Body of pancreas (tissue), 4 donors: ENCODE measurements at regions of chr1 and their contacts with region 1.

Region 1: GRCh38 chr1:39609618-39610331 is 29.7 kb downstream of the HEYL start:
- DNase-seq: peak in 3 of 4 donors; percentile 53 to 68 (median 60)
- ATAC-seq: no peak
- H3K4me3 ChIP-seq: no peak overlapping the region
- H3K27ac ChIP-seq: no peak overlapping the region
- H3K4me1 ChIP-seq: peaks cover 4% of the 10 kb centered on the region
- H3K27me3 ChIP-seq: no peaks in the 10 kb centered on the region
- CTCF ChIP-seq: peak in 5 of 7 experiments; percentile 18 to 61 (median 47)
- POLR2A ChIP-seq: no peak

Region 2: DNA sequence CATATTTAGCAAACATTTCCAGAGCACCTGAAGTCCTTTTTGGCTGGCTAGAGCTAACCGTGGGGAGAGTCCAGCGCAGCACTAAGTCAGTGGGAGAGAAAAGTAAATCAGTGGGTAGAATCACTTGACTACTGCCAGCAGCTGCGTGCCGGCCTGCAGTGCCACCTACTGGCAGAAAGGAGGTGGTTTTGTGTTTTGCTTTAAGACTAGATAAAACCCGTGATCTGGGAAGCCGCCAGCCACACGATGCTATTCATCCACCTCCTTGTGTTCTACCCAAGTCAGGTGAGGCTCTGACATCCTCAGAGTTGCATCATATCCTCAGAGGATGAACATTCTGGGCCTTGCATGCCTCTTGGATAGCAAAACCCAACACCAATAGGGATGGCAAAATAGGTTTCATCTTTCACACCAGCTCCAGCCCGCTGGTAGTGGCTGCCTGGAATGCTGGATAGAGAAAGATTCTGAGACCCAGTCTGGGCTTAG is 43.8 kb after region 1 on chr1:
- intact Hi-C with region 1: loop called (anchors 5 kb)
- DNase-seq: peak; percentile 83 to 88 (median 83)
- ATAC-seq: peak; percentile 81
- H3K4me3 ChIP-seq: no peak overlapping the region
- H3K27ac ChIP-seq: peak overlapping the region in 2 of 4 donors; percentile 1 to 40
- H3K4me1 ChIP-seq: peaks cover 30% of the 10 kb centered on the region
- H3K27me3 ChIP-seq: no peaks in the 10 kb centered on the region
- CTCF ChIP-seq: peak; percentile 85 to 95 (median 91)
- POLR2A ChIP-seq: no peak

Region 3: DNA sequence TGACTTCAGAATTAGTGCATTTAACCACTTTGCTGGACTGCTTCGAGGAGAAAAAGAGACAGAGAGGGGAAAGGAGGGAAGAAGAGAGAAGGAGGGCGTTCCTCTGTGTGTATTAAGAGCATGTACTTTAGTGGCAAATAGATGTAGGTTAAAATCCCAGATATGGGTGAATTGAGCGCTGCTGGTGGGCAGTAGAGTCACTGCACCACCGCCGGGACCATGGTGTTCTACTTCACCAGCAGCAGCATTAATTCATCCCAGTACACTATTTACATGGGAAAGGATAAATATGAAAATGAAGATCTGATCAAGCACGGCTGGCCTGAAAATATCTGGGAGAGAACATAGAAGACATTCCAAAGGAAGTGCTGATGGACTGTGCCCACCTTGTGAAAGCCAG is 108.0 kb after region 1 on chr1:
- intact Hi-C with region 1: loop called (anchors 5 kb)
- DNase-seq: no peak
- ATAC-seq: no peak
- H3K4me3 ChIP-seq: no peak overlapping the region
- H3K27ac ChIP-seq: no peak overlapping the region
- H3K4me1 ChIP-seq: no peaks in the 10 kb centered on the region
- H3K27me3 ChIP-seq: no peaks in the 10 kb centered on the region
- CTCF ChIP-seq: no peak
- POLR2A ChIP-seq: no peak

Region 4: DNA sequence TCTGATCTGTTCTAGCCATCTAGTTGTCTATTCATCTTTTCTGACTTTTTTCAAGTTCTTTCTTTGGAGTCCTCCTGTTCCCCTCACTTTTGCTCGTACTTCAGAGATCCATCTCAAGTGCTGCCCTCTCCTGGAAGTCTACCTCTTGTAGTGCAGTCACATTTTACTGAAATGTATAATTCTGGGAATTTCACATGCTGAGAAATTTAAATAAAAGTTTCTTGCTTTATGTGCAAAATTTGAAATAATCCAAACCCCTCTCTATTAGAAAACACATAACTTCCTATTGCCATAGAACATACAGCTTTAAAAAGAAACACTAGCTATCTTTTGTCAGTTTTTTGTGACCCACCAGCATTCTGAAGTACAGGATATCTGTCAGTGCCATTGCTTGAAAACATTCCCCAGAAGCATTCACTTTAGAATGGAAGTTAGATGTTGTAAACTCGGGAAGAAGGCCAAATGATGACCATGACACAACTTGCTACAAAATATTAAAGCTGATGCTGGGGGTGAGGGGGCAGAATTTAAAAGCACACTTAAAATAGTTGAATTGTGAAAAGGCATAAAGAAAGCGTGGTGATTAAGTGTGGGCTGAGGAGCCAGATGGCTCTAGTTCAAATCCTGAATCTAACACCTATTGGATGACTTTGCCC is 573.4 kb after region 1 on chr1:
- intact Hi-C with region 1: no loop called
- DNase-seq: no peak
- ATAC-seq: no peak
- H3K4me3 ChIP-seq: no peak overlapping the region
- H3K27ac ChIP-seq: no peak overlapping the region
- H3K4me1 ChIP-seq: no peaks in the 10 kb centered on the region
- H3K27me3 ChIP-seq: no peaks in the 10 kb centered on the region
- CTCF ChIP-seq: peak in 2 of 7 experiments; percentile 22 to 28
- POLR2A ChIP-seq: no peak